Endothelial cell of umbilical vein (primary cell): ENCODE measurements at regions of chr19 and their contacts with region 1.

Region 1: GRCh38 chr19:17226002-17226933 is at the start of gene OCEL1:
- DNase-seq: peak; percentile 98
- H3K4me3 ChIP-seq: peak within 1 kb of the TSS; percentile 38 to 67 (median 53)
- H3K27ac ChIP-seq: peak within 1 kb of the TSS; percentile 40
- H3K4me1 ChIP-seq: peaks cover 5% of the 10 kb centered on the region
- H3K27me3 ChIP-seq: no peaks in the 10 kb centered on the region
- CTCF ChIP-seq: no peak
- POLR2A ChIP-seq: peak; percentile 85
- total RNA-seq, gene OCEL1: 12.5 and 13.0 TPM in 2 replicates

Region 2: DNA sequence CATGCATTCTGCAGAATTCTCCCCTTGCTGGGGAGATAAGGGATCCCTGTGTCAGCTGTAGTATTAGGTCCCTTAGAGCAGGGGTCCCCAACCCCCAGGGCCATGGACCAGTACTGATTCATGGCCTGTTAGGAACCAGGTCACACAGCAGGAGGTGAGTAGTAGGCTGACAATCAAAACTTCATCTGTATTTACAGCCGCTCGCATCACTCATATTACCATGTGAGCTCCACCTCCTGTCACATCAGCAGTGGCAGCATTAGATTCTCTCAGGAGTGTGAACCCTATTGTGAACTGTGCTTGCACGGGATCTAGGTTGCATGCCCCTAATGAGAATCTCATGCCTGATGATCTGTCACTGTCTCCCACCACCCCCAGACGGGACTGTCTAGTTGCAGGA is 237.6 kb before region 1 on chr19:
- CTCF ChIA-PET with region 1: no interaction called
- POLR2A ChIA-PET with region 1: no interaction called
- dilution Hi-C with region 1: no loop called
- intact Hi-C with region 1: no loop called
- DNase-seq: no peak
- H3K4me3 ChIP-seq: no peak overlapping the region
- H3K27ac ChIP-seq: no peak overlapping the region
- H3K4me1 ChIP-seq: no peaks in the 10 kb centered on the region
- H3K27me3 ChIP-seq: no peaks in the 10 kb centered on the region
- CTCF ChIP-seq: no peak
- POLR2A ChIP-seq: no peak

Region 3: DNA sequence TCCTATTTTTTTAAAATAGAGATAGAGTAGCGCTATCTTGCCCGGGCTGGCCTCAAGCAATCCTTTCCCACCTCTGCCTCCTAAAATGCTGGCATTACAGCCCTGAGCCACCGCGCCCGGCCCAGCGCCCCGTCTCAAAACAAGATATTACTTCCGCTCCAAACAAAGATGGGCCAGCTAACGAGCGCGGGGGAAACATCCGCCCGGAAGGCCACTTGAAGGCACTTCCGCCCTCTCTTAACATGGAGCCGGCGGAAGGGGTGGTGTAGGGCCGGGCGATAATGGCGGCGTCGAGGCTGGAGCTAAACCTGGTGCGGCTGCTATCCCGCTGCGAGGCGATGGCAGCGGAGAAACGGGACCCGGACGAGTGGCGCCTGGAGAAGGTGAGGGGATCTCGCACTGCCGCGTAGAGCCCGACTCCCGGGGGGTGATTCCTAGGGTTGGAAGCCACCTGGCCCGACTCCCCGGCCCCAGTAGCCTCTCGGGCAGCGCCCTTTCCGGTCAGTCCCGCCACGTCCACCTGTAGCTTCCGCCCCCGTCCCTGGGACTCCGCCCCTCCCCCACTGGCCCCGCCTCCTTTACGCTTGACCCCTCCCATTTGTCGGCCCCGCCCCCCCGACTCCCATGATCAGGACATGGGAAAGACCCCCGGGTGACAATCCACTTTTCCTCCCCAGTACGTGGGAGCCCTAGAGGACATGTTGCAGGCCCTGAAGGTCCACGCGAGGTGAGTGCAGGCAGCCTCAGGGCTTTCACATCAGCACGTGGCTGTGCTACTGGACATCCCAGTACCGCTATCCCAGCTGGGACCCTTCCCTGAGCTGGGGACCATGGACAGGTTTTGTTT is 10.9 kb before region 1 on chr19 and contains the start of gene USE1:
- CTCF ChIA-PET with region 1: no interaction called
- POLR2A ChIA-PET with region 1: no interaction called
- dilution Hi-C with region 1: no loop called
- intact Hi-C with region 1: loop called (anchors 1 kb)
- DNase-seq: peak; percentile 78
- H3K4me3 ChIP-seq: peak within 1 kb of the TSS; percentile 54 to 66 (median 57)
- H3K27ac ChIP-seq: peak within 1 kb of the TSS; percentile 88
- H3K4me1 ChIP-seq: peaks cover 7% of the 10 kb centered on the region
- H3K27me3 ChIP-seq: no peaks in the 10 kb centered on the region
- CTCF ChIP-seq: no peak
- POLR2A ChIP-seq: peak; percentile 89
- total RNA-seq, gene USE1: 21.2 and 21.3 TPM in 2 replicates

Region 4: GRCh38 chr19:17266975-17267788 is 40.9 kb after region 1 on chr19 and contains the start of gene BABAM1:
- CTCF ChIA-PET with region 1: interaction called, 4 read pairs
- POLR2A ChIA-PET with region 1: no interaction called
- dilution Hi-C with region 1: no loop called
- intact Hi-C with region 1: loop called (anchors 2 kb)
- DNase-seq: peak; percentile 99
- H3K4me3 ChIP-seq: peak within 1 kb of the TSS; percentile 95 to 99 (median 99)
- H3K27ac ChIP-seq: peak within 1 kb of the TSS; percentile 56
- H3K4me1 ChIP-seq: peaks cover 18% of the 10 kb centered on the region
- H3K27me3 ChIP-seq: no peaks in the 10 kb centered on the region
- CTCF ChIP-seq: no peak
- POLR2A ChIP-seq: peak; percentile 82
- total RNA-seq, gene BABAM1: 110 and 118 TPM in 2 replicates